AG04449 (cell line): ENCODE measurements at regions of chr3 and their contacts with region 1.

Region 1: DNA sequence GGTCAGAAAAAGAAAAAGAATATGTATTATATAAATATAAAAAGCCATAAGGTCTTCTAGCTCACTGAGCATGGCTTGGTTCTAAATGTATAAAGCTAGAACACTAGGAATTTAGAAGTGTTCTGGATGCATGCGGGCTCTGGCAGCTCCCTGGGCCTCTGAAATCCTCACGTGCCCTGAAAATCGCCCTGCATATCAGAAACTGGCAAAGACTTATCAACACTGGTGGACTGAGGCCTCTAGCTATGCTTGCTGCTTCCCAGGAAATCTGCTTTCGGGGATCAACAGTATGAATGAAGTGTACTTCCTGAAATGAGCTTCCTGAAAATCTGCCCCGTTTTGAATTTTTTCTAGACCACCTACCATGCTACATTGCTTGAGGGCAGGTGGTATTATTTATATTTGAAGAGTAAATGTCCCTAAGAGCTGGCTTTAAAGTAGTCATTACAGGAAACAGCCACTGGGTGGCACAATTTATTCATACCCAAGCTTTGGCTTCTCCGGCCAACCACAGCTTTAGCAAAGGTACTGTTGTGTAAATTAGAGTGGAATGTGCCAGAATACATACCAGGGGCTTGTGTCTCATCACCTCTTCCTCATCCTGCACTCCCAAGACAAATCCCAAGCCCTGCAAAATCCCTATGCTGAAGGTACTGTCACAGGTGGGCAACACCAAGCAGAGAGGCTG is 17.7 kb downstream of the CRTAP start:
- DNase-seq: no peak
- H3K4me3 ChIP-seq: no peak overlapping the region
- CTCF ChIP-seq: peak; percentile 36

Region 2: GRCh38 chr3:32872487-32873382 is 258.7 kb before region 1 on chr3:
- CTCF ChIA-PET with region 1: no interaction called
- POLR2A ChIA-PET with region 1: no interaction called
- DNase-seq: peak; percentile 10
- H3K4me3 ChIP-seq: no peak overlapping the region
- CTCF ChIP-seq: no peak

Region 3: DNA sequence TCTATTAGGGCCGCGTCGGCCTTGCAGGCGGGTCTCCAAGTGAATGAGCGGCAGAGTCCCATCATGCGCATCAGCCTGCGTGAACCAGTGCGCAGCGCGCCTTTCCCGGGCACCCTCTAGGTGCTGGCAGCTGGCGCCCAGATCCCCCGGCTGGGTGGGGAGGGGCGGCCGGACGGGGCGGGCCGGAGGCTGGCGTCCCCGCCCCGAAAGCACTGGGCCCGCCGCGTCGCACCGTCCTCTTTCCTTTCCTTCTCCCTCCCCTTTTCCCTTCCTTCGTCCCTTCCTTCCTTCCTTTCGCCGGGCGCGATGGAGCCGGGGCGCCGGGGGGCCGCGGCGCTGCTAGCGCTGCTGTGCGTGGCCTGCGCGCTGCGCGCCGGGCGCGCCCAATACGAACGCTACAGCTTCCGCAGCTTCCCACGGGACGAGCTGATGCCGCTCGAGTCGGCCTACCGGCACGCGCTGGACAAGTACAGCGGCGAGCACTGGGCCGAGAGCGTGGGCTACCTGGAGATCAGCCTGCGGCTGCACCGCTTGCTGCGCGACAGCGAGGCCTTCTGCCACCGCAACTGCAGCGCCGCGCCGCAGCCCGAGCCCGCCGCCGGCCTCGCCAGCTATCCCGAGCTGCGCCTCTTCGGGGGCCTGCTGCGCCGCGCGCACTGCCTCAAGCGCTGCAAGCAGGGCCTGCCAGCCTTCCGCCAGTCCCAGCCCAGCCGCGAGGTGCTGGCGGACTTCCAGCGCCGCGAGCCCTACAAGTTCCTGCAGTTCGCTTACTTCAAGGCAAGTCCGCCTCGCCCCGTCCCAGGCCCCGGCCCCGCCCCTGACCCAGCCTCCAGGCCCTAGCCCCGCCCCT is 17.5 kb before region 1 on chr3 and contains the start of gene CRTAP:
- CTCF ChIA-PET with region 1: interaction called, 34 read pairs
- POLR2A ChIA-PET with region 1: no interaction called
- DNase-seq: peak; percentile 69
- H3K4me3 ChIP-seq: peak within 1 kb of the TSS; percentile 84
- CTCF ChIP-seq: no peak

Region 4: DNA sequence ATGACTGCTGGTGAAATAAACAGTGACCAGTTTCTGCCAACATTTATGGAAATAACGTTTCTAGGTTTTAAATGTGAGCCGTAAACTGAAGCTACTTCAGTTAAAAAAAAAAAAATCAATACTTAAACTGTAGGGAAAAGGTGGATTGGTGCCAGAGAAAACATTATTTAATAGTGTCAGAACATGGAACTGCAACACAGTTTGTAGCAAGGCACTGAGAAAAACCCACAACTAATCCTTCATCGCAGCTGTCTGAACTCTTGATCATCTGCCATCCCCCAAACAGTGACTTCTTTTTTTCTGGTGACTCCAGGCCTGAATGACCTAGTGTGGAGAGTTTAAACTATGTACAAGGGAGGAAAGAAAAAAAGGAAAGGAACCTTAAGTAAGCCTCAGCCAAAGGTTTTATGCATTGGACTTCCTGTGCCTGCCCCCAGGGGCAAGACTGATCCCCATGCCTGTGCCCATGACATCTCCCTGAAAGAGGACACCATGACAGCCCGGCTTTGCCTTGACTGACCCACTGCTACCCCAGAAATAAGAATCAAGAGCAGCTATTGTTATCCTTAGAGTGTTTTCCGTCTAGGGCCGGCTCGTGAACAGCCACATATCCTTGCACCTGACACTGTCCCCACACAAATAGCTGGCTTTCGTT is 15.4 kb after region 1 on chr3:
- CTCF ChIA-PET with region 1: interaction called, 10 read pairs
- POLR2A ChIA-PET with region 1: interaction called, 4 read pairs
- DNase-seq: no peak
- H3K4me3 ChIP-seq: no peak overlapping the region
- CTCF ChIP-seq: no peak

Region 5: GRCh38 chr3:33391255-33391995 is 259.9 kb after region 1 on chr3:
- CTCF ChIA-PET with region 1: interaction called, 16 read pairs
- POLR2A ChIA-PET with region 1: no interaction called
- DNase-seq: no peak
- H3K4me3 ChIP-seq: no peak overlapping the region
- CTCF ChIP-seq: no peak

Region 6: GRCh38 chr3:33787328-33788009 is 656.0 kb after region 1 on chr3:
- CTCF ChIA-PET with region 1: interaction called, 46 read pairs
- POLR2A ChIA-PET with region 1: no interaction called
- DNase-seq: peak; percentile 9
- H3K4me3 ChIP-seq: peak overlapping the region; percentile 51
- CTCF ChIP-seq: peak; percentile 79